Dendritic cell treated with granulocyte-macrophage colony-stimulating factor and Interleukin-4, amounts not matched to agents 40 ng/mL and 50 ng/mL, for 4 days (primary cell): ENCODE measurements at regions of chr18 and their contacts with region 1.

Region 1: GRCh38 chr18:74342416-74343043 is 26.9 kb downstream of the C18orf63 start:
- H3K4me3 Mint-ChIP-seq: no peak overlapping the region
- H3K27ac Mint-ChIP-seq: no peak overlapping the region
- H3K4me1 Mint-ChIP-seq: no peaks in the 10 kb centered on the region
- H3K27me3 Mint-ChIP-seq: peaks cover 4% of the 10 kb centered on the region

Region 2: DNA sequence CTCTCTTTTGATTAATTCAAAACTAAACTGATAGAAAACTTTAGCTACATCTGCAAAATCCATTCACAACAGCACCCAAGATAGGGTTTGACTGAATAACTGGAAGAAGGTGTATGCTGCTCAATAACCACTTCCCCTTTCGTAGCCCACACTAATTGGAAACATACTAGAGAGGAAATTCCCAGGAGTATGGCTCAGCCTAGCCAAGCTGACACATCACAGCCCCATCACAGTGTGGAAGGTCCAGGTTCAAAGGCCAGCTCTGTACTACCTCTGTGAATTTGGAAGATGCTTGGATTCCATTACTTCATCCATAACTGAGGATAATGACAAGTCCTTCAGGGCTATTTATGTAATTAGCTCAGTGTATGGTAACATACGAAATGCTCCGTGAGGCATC is 380.3 kb before region 1 on chr18:
- intact Hi-C with region 1: no loop called
- H3K4me3 Mint-ChIP-seq: no peak overlapping the region
- H3K27ac Mint-ChIP-seq: no peak overlapping the region
- H3K4me1 Mint-ChIP-seq: no peaks in the 10 kb centered on the region
- H3K27me3 Mint-ChIP-seq: peaks cover 7% of the 10 kb centered on the region

Region 3: DNA sequence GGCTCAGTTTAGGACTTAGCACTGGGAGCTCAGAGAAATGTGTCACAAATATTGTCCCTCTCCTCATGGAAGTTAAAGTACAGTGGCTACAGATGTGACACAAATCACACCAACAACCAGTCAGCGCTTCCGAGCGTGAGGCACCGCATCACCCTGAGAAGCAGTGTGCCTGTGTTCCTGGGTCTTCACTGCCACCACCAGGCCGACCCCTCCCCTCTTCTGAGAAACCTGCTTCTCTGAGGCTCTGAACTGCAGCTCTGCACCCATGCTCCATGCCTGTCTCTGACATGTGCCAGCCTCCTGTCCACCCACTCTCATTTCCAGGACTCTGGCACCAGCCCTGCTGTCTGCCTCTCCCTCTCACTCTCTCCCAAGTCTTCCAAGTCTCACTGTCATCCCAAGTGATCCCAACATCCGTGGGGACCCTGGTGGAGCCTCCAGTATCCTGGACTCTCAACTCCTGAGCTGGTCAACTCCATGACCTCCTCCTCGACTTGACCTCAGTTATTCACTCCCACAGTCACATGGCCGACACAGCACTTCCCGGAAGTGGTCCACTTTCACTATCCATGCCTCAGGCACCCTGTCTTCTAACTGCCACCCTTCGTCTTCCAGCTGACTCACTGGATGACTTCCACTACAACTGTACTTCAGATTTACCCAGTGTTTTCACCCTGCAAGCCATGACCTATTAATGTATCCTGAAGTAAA is 268.4 kb before region 1 on chr18:
- intact Hi-C with region 1: no loop called
- H3K4me3 Mint-ChIP-seq: no peak overlapping the region
- H3K27ac Mint-ChIP-seq: no peak overlapping the region
- H3K4me1 Mint-ChIP-seq: peaks cover 13% of the 10 kb centered on the region
- H3K27me3 Mint-ChIP-seq: peaks cover 1% of the 10 kb centered on the region

Region 4: GRCh38 chr18:74196220-74197119 is 146.1 kb before region 1 on chr18:
- intact Hi-C with region 1: loop called (anchors 1 kb)
- H3K4me3 Mint-ChIP-seq: peak overlapping the region; percentile 13
- H3K27ac Mint-ChIP-seq: no peak overlapping the region
- H3K4me1 Mint-ChIP-seq: peaks cover 12% of the 10 kb centered on the region
- H3K27me3 Mint-ChIP-seq: peaks cover 13% of the 10 kb centered on the region

Region 5: GRCh38 chr18:74436158-74436769 is 93.7 kb after region 1 on chr18:
- intact Hi-C with region 1: no loop called
- H3K4me3 Mint-ChIP-seq: no peak overlapping the region
- H3K27ac Mint-ChIP-seq: no peak overlapping the region
- H3K4me1 Mint-ChIP-seq: peaks cover 12% of the 10 kb centered on the region
- H3K27me3 Mint-ChIP-seq: no peaks in the 10 kb centered on the region